ENCODE measurements at regions of chr1 and their contacts with region 1.

Region 1: GRCh38 chr1:168603501-168604110 is 27.2 kb downstream of the XCL1 start:
- DNase-seq: peak; percentile 7
- ATAC-seq: peak; percentile 99
- H3K4me3 ChIP-seq: no peak overlapping the region
- H3K27ac ChIP-seq: no peak overlapping the region
- H3K4me1 ChIP-seq: no peaks in the 10 kb centered on the region
- H3K27me3 ChIP-seq: no peaks in the 10 kb centered on the region; a peak in 1 of 4 replicates
- CTCF ChIP-seq: peak; percentile 76 to 92 (median 80)
- EP300 ChIP-seq: no peak
- POLR2A ChIP-seq: no peak
- RAD21 ChIP-seq: peak; percentile 97

Region 2: GRCh38 chr1:168452329-168452728 is 151.3 kb before region 1 on chr1:
- CTCF ChIA-PET with region 1: interaction called, 226 read pairs
- POLR2A ChIA-PET with region 1: no interaction called
- RAD21 ChIA-PET with region 1: interaction called, 21 read pairs
- SMC1A ChIA-PET with region 1: interaction called, 314 read pairs
- in situ Hi-C with region 1: no loop called
- intact Hi-C with region 1: no loop called
- DNase-seq: no peak
- ATAC-seq: peak; percentile 63
- H3K4me3 ChIP-seq: no peak overlapping the region
- H3K27ac ChIP-seq: no peak overlapping the region
- H3K4me1 ChIP-seq: no peaks in the 10 kb centered on the region
- H3K27me3 ChIP-seq: no peaks in the 10 kb centered on the region
- CTCF ChIP-seq: peak; percentile 24 to 32 (median 29); a peak in 2 of 6 replicates
- EP300 ChIP-seq: no peak
- POLR2A ChIP-seq: no peak
- RAD21 ChIP-seq: peak; percentile 42

Region 3: GRCh38 chr1:168520052-168520751 is 83.4 kb before region 1 on chr1:
- CTCF ChIA-PET with region 1: interaction called, 9 read pairs
- POLR2A ChIA-PET with region 1: no interaction called
- RAD21 ChIA-PET with region 1: interaction called, 8 read pairs
- SMC1A ChIA-PET with region 1: interaction called, 11 read pairs
- in situ Hi-C with region 1: no loop called
- intact Hi-C with region 1: no loop called
- DNase-seq: no peak
- ATAC-seq: peak; percentile 95
- H3K4me3 ChIP-seq: no peak overlapping the region
- H3K27ac ChIP-seq: no peak overlapping the region
- H3K4me1 ChIP-seq: peaks cover 10% of the 10 kb centered on the region
- H3K27me3 ChIP-seq: no peaks in the 10 kb centered on the region; a peak in 1 of 4 replicates
- CTCF ChIP-seq: no peak
- EP300 ChIP-seq: peak; percentile 46 to 74; a peak in 2 of 4 replicates
- POLR2A ChIP-seq: no peak
- RAD21 ChIP-seq: no peak

Region 4: DNA sequence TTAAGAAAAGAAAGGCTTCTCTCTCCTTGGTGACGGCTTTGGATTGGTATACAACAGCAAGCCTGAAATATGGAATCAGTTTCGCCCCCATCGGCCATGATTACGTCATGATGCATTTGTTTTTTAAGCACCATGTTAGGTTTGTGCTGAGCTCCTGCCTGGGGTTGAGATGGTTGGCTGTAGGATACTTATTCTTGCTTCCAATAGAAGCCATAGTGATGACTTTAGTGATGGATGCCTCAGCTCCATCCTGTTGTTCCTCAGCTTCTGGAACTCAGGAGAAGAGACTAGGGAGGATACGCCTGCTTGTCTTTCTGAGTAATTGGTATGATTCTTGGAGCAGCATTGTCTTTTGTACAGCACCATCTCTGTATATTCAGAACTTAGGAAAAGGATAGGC is 12.5 kb before region 1 on chr1:
- CTCF ChIA-PET with region 1: interaction called, 32 read pairs
- POLR2A ChIA-PET with region 1: interaction called, 4 read pairs
- RAD21 ChIA-PET with region 1: interaction called, 11 read pairs
- SMC1A ChIA-PET with region 1: interaction called, 35 read pairs
- in situ Hi-C with region 1: no loop called
- intact Hi-C with region 1: no loop called
- DNase-seq: no peak
- ATAC-seq: no peak
- H3K4me3 ChIP-seq: no peak overlapping the region
- H3K27ac ChIP-seq: no peak overlapping the region
- H3K4me1 ChIP-seq: no peaks in the 10 kb centered on the region
- H3K27me3 ChIP-seq: no peaks in the 10 kb centered on the region
- CTCF ChIP-seq: no peak
- EP300 ChIP-seq: no peak
- POLR2A ChIP-seq: no peak
- RAD21 ChIP-seq: no peak

Region 5: GRCh38 chr1:169106095-169106920 is 502.7 kb after region 1 on chr1 and contains the start of gene ATP1B1:
- CTCF ChIA-PET with region 1: interaction called, 48 read pairs
- POLR2A ChIA-PET with region 1: no interaction called
- RAD21 ChIA-PET with region 1: interaction called, 33 read pairs
- SMC1A ChIA-PET with region 1: interaction called, 21 read pairs
- in situ Hi-C with region 1: no loop called
- intact Hi-C with region 1: loop called (anchors 2 kb)
- DNase-seq: no peak
- ATAC-seq: peak; percentile 94
- H3K4me3 ChIP-seq: peak within 1 kb of the TSS; percentile 86
- H3K27ac ChIP-seq: no peak within 1 kb of the TSS
- H3K4me1 ChIP-seq: peaks cover 3% of the 10 kb centered on the region; the same call in 1 of the 2 replicates
- H3K27me3 ChIP-seq: peaks cover 2 to 6% of the 10 kb centered on the region in 2 experiments; a peak in 2 of 4 replicates
- CTCF ChIP-seq: peak in 2 of 3 experiments; percentile 21 to 36; a peak in 3 of 6 replicates
- EP300 ChIP-seq: no peak
- POLR2A ChIP-seq: peak; percentile 84
- RAD21 ChIP-seq: no peak
- polyA plus RNA-seq, gene ATP1B1: 0.84 to 0.90 TPM

Region 6: DNA sequence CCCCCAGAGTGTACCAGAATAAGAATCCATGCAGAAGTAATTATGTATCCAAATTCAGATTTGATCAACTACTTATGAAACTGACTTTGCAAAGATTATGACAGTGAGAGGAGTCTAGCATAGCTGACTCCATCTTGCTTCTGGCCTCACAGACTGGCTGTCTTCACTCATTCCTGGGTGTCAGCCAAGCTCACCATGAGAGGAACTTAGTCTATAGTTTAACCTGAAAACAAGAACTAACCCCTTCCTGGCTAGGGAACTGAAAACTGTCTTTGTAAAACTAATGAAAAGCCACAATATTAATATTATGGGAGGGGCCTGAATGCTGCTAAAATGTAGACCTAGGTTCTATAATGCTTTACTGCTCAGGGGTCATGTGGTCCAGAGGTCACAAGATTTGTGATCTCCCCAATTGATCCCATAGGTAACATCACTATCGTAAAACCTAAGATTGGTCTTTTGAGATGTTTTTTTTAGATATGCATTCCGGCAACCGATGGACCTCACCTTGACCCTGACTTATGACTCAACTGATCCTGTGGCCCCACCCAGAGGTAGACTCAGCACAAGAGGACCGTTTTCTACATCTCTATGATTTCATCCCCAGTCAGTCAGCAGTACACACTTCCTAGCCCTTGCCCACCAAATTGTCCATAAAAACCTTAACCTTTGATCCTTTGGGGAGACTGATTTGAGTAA is 558.0 kb after region 1 on chr1:
- CTCF ChIA-PET with region 1: interaction called, 21 read pairs
- POLR2A ChIA-PET with region 1: no interaction called
- RAD21 ChIA-PET with region 1: interaction called, 17 read pairs
- SMC1A ChIA-PET with region 1: interaction called, 37 read pairs
- in situ Hi-C with region 1: no loop called
- intact Hi-C with region 1: loop called (anchors 5 kb)
- DNase-seq: peak; percentile 34
- ATAC-seq: peak; percentile 95
- H3K4me3 ChIP-seq: no peak overlapping the region
- H3K27ac ChIP-seq: no peak overlapping the region; the same call in 1 of the 2 replicates
- H3K4me1 ChIP-seq: peaks cover 12% of the 10 kb centered on the region; the same call in 1 of the 2 replicates
- H3K27me3 ChIP-seq: no peaks in the 10 kb centered on the region
- CTCF ChIP-seq: peak in 1 of 3 experiments; percentile 5; a peak in 1 of 6 replicates
- EP300 ChIP-seq: no peak; a peak in 2 of 4 replicates
- POLR2A ChIP-seq: no peak
- RAD21 ChIP-seq: peak; percentile 66

Measured in GM12878 (cell line).